AG04450 (cell line): ENCODE measurements at regions of chr13 and their contacts with region 1.

Region 1: GRCh38 chr13:108895220-108895704 is 265.9 kb downstream of the MYO16 start:
- DNase-seq: no peak
- H3K4me3 ChIP-seq: no peak overlapping the region
- H3K27ac ChIP-seq: no peak overlapping the region
- H3K27me3 ChIP-seq: no peaks in the 10 kb centered on the region
- CTCF ChIP-seq: peak; percentile 47

Region 2: DNA sequence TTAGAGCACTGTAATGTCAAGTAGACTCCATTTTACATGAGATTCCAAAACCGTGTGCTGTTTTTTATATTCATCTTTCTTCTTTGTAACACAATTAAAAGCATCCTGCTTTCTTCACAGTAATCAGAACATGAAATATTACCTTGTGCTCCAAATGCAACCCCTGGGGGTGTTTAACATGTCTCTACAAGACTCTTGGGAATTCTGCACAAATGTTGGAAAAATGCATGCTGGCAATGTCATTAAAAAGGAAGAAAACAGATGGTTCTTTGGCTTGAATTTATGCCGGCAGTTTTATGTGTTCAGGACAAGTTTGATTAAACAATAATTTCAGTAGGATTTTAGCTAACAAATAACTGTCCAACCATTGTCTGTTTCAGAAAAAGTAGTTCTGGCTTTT is 839.0 kb before region 1 on chr13:
- CTCF ChIA-PET with region 1: no interaction called
- POLR2A ChIA-PET with region 1: no interaction called
- DNase-seq: no peak
- H3K4me3 ChIP-seq: no peak overlapping the region
- H3K27ac ChIP-seq: no peak overlapping the region
- H3K27me3 ChIP-seq: no peaks in the 10 kb centered on the region
- CTCF ChIP-seq: no peak

Region 3: GRCh38 chr13:108322206-108322824 is 572.9 kb before region 1 on chr13:
- CTCF ChIA-PET with region 1: interaction called, 21 read pairs
- POLR2A ChIA-PET with region 1: no interaction called
- DNase-seq: peak; percentile 4
- H3K4me3 ChIP-seq: no peak overlapping the region
- H3K27ac ChIP-seq: no peak overlapping the region
- H3K27me3 ChIP-seq: peaks cover 2% of the 10 kb centered on the region
- CTCF ChIP-seq: peak; percentile 76

Region 4: GRCh38 chr13:108609353-108609752 is 285.9 kb before region 1 on chr13:
- CTCF ChIA-PET with region 1: interaction called, 130 read pairs
- POLR2A ChIA-PET with region 1: no interaction called
- DNase-seq: peak; percentile 6
- H3K4me3 ChIP-seq: no peak overlapping the region
- H3K27ac ChIP-seq: no peak overlapping the region
- H3K27me3 ChIP-seq: no peaks in the 10 kb centered on the region
- CTCF ChIP-seq: peak; percentile 49

Region 5: DNA sequence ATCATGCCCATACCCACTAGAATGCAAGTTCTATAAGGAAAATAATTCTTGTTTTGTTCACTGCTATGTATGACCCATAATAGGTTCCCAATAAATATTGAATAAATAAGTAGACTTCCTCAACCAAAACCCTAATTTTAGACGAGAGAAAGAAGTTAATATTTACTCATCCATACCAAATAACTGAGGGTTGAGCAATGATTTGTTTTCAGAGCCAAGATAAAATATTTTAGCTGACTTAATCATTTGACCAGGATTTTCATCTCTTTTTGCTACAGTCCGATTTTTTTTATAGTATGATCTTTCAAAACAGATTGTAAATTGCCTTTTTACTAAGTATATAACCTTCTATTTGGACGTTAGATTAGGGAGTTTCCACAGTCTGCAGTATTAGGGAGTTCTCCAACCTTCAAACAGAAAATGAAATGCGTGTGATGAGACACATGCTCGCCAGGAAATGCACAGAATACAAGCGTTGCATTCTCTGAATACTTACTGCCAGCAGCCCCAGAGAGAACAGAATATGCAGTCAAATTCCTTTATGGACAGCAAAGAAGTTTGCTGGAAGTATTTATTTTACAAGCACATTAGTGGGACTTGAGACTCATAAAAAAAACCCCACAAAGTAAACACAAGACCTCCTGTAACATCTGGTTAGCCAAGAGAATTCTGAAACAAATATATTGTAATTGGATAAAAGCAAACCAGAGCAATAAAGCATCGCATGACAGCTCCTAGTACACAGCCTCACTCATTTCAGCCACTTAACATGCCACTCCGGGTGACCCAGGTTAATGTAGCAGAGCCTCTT is 35.9 kb before region 1 on chr13:
- CTCF ChIA-PET with region 1: interaction called, 13 read pairs
- POLR2A ChIA-PET with region 1: no interaction called
- DNase-seq: peak; percentile 78
- H3K4me3 ChIP-seq: peak overlapping the region; percentile 7; the same call in 1 of the 2 replicates
- H3K27ac ChIP-seq: no peak overlapping the region
- H3K27me3 ChIP-seq: no peaks in the 10 kb centered on the region
- CTCF ChIP-seq: no peak

Region 6: GRCh38 chr13:108915634-108916512 is 20.6 kb after region 1 on chr13:
- CTCF ChIA-PET with region 1: interaction called, 16 read pairs
- POLR2A ChIA-PET with region 1: no interaction called
- DNase-seq: peak; percentile 65
- H3K4me3 ChIP-seq: no peak overlapping the region
- H3K27ac ChIP-seq: peak overlapping the region; percentile 68
- H3K27me3 ChIP-seq: no peaks in the 10 kb centered on the region
- CTCF ChIP-seq: no peak

Region 7: DNA sequence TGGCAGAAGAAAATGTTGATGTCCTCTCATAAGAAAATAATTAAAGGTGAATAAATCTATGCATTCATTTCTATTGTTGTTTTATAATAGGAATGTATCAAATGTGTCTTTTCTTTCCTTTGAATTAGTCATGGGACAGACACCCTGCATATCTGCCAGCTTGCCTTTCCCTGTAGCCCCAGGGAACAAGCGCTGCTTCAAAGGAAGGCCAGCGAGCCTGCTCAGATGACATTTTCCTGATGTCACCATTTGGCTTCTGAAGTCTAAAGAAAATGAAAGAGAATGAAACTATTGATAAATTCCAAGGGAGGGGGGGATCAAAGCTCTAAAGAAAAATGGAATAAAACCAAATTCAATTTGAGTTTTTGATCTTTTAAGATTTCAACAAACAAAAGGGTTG is 316.4 kb after region 1 on chr13:
- CTCF ChIA-PET with region 1: no interaction called
- POLR2A ChIA-PET with region 1: no interaction called
- DNase-seq: no peak
- H3K4me3 ChIP-seq: no peak overlapping the region
- H3K27ac ChIP-seq: no peak overlapping the region
- H3K27me3 ChIP-seq: no peaks in the 10 kb centered on the region
- CTCF ChIP-seq: no peak